WTC11 (cell line): ENCODE measurements at regions of chr13 and their contacts with region 1.

Region 1: DNA sequence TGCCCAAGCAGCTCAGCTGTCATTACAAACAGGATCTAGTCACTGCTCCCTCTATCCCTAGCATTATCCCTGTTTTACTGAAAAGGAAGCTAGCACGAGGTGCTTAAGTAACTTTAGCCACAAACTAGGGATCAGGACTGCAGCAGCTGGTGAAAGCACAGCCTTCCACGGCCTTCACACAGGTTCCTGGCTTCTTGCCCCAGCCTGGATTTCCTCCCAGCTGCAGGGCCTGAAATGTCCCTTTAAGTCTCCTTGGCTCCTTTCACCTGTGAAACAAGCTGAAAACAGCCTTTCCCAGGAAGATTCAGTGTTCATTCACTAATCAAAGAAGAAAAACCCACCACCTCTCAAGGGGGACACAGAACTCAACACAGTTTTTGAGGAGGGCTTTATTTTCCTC is 754.5 kb downstream of the DIAPH3 start:
- DNase-seq: peak; percentile 18
- ATAC-seq: peak; percentile 54
- H3K4me3 Mint-ChIP-seq: peak overlapping the region; percentile 38
- H3K27ac Mint-ChIP-seq: peak overlapping the region; percentile 64
- H3K4me1 Mint-ChIP-seq: peaks cover 59% of the 10 kb centered on the region
- H3K27me3 Mint-ChIP-seq: peaks cover 52% of the 10 kb centered on the region
- CTCF ChIP-seq: no peak

Region 2: DNA sequence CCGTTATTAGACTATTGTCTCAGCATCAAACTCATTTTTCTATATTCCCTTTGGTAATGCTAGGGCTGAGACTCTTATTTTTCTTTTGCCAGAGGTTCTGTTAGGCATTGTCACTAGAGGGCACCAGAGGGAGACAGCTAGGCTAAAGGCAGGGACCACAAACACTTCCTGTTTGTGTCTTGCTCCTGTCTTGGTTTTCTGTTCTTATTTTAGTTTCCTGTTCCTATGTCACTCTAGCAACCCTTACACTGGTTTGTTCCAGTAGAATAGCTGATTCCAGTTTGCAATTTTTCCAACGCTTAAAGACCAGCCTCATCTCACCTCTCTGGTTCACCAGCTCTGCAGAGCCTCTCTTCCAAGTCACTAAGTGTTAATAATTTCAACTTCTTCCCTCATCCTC is 17.5 kb before region 1 on chr13:
- CTCF ChIA-PET with region 1: interaction called, 10 read pairs
- POLR2A ChIA-PET with region 1: no interaction called
- DNase-seq: peak; percentile 48
- ATAC-seq: peak; percentile 86
- H3K4me3 Mint-ChIP-seq: no peak overlapping the region
- H3K27ac Mint-ChIP-seq: no peak overlapping the region
- H3K4me1 Mint-ChIP-seq: peaks cover 12% of the 10 kb centered on the region
- H3K27me3 Mint-ChIP-seq: no peaks in the 10 kb centered on the region
- CTCF ChIP-seq: peak; percentile 66